Posterior cingulate gyrus (tissue), 11 donors: ENCODE measurements at regions of chr5 and their contacts with region 1.

Region 1: GRCh38 chr5:177113566-177114424 is 19.8 kb upstream of the NSD1 start:
- DNase-seq: peak; percentile 61 to 96 (median 83)

Region 2: DNA sequence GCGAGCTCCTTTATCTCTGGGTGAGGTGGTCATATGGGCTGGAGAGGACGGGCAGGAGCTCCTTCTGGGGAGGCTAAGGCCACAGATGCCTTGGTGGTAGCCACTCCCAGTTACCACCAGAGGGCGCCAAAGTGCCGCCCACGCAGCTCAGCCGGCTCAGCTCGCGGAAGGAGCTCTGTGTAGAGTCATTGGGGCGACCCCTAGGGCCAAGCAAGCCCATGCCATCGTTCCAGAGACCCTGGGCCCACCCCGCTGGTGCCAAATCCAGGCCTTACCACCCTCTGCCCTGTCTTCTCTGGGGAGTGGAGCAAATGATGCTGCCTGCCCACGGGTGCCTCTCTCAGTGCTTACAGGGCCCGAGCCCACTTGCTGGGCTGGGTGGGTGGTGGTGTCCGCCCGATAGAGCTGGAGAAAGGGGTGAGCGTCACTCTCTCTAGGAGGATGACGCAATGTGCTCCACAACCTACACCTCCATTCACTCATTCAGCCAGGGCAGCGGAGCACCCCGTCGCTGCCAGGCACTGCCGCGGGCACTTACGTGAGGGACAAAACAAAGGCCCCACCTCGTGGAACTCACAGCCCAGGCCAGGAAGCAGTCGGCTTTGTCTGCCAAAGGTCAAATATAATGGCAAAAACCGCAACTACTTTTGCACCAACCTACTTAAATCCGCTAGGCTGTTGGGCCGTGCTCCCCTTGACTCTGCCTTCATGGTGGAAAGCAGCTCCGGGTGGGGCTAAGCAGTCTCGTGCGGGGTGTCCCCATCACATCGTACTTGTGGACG is 452.7 kb before region 1 on chr5:
- intact Hi-C with region 1: loop called (anchors 5 kb)
- DNase-seq: peak; percentile 57 to 97 (median 82)

Region 3: DNA sequence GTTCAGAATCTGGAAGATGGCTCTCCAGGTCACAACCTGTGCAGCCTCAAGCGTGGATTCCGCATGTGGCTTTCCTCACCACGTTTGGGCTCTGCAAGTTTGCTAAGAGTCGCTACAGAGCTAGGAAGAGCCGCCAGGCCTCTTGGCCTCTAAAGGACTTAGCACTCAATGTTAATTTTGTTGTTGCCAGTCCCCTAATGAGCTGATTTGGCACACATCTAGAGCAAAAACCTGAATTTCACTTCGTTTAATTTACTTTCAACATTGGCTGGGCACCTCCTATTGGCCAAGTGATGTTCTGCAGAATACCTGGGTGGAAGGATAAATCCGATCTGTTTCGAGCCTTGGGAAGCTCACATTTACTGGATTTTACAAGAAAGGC is 369.2 kb before region 1 on chr5:
- intact Hi-C with region 1: no loop called
- DNase-seq: peak in 3 of 10 donors; percentile 38 to 52 (median 38)

Region 4: DNA sequence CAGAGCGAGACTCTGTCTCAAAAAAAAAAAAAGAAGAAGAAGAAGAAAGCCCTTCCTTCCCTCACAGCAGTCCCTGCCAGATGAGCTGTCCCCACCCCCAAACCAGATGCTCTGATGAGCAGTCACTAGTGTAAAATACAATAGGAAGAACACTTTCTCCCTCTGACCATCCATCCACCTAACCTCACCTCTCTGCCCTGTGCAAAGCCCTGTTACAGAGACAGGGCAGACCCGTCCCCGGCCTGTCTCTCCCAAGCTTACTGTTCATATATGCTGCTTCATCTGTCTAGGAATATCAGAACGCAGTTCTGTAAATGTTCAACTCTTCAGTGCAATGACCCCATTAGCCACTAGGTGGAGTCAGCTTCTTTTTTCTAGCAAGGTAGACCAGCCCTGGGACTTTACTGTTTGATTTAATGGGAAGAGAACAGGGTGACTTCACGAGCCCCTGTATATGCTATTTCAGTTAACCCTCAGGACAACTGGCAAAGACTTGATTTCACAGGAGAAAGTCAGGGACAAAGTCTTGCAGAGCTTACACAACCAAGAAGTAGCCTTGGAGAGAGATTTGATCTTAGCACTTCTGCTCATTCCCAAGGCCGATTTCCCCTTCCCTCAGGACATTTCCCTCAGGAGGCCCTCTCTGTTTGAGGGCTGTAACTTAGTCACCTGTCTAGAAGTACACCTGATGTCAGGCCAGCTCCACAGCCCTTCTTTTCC is 42.0 kb before region 1 on chr5:
- intact Hi-C with region 1: loop called (anchors 1 kb)
- DNase-seq: peak in 6 of 10 donors; percentile 29 to 82 (median 57)

Region 5: GRCh38 chr5:177133091-177133852 is 19.5 kb after region 1 on chr5 and contains the start of gene NSD1:
- intact Hi-C with region 1: loop called (anchors 1 kb)
- DNase-seq: peak; percentile 80 to 99 (median 89)